Mammary epithelial cell (primary cell): ENCODE measurements at regions of chr6 and their contacts with region 1.

Region 1: DNA sequence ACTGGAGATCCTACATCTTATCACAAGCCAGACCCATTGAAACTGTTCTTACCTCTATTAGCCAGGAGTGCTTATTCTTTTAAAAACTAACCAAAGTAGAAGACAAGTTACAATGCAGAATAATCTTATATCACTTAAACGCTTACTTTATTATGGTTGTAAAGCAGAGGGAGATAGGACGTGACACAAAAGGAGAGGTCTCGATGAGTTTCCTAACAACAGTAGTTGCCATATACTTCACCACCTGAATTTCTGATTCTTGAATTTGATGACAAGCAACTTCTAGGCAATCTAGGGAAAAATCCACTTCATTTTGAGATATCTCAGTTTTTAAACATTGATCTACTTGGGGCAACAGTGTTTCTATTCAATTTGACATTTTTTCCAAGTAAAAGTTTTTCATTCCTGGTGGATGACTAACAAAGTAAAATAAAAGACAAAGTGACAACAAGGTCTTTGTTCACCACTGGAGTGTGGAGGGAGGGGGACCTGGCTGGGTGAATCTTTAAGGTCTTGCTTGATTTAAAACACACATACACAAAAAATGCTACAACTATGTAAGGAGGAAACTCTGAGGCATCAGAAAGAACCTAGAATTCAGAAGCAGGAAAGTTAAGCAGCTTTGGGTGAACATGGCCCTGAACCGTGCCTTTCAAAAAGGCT is 110.9 kb downstream of the SMLR1 start:
- DNase-seq: peak; percentile 20
- H3K4me3 ChIP-seq: no peak overlapping the region
- H3K27ac ChIP-seq: peak overlapping the region; percentile 29
- H3K4me1 ChIP-seq: peaks cover 8% of the 10 kb centered on the region
- H3K27me3 ChIP-seq: no peaks in the 10 kb centered on the region
- CTCF ChIP-seq: no peak

Region 2: DNA sequence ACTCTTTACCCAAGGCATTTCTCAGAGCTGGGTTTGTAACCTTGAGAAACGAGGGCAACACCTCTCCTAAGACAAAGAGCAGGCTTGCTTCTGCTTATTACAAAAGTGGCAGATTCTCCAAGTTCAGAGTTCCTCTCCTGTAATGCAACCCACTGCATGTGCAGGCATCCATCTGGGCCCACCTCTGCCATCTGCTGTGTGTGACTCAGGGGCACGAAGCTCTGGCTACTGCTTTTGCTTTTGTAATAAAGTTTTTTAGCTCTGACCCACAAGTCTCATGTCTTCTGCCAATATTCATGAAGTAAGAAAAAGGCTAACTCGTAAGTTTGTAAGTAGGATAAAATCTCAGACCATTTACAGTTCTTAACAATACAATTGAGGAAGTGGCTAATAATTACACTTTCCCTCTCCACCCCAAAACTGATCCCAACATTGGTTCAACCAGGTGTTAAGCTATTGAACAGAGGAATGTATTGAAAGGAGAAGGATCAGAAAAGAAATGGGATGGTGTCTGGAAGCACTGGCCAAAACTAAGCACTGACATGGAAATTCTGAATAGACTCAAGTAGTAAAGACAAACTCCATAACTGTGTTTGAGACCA is 162.6 kb before region 1 on chr6:
- CTCF ChIA-PET with region 1: no interaction called
- dilution Hi-C with region 1: no loop called
- in situ Hi-C with region 1: no loop called
- intact Hi-C with region 1: no loop called
- DNase-seq: no peak
- H3K4me3 ChIP-seq: no peak overlapping the region
- H3K27ac ChIP-seq: no peak overlapping the region
- H3K4me1 ChIP-seq: no peaks in the 10 kb centered on the region
- H3K27me3 ChIP-seq: no peaks in the 10 kb centered on the region
- CTCF ChIP-seq: no peak

Region 3: GRCh38 chr6:130900913-130901312 is 37.2 kb before region 1 on chr6:
- CTCF ChIA-PET with region 1: no interaction called
- dilution Hi-C with region 1: no loop called
- in situ Hi-C with region 1: no loop called
- intact Hi-C with region 1: loop called (anchors 5 kb)
- DNase-seq: peak; percentile 62
- H3K4me3 ChIP-seq: no peak overlapping the region
- H3K27ac ChIP-seq: no peak overlapping the region
- H3K4me1 ChIP-seq: peaks cover 10% of the 10 kb centered on the region
- H3K27me3 ChIP-seq: no peaks in the 10 kb centered on the region
- CTCF ChIP-seq: no peak